Dorsolateral prefrontal cortex (tissue), 120 donors: ENCODE measurements at regions of chr9 and their contacts with region 1.

Region 1: DNA sequence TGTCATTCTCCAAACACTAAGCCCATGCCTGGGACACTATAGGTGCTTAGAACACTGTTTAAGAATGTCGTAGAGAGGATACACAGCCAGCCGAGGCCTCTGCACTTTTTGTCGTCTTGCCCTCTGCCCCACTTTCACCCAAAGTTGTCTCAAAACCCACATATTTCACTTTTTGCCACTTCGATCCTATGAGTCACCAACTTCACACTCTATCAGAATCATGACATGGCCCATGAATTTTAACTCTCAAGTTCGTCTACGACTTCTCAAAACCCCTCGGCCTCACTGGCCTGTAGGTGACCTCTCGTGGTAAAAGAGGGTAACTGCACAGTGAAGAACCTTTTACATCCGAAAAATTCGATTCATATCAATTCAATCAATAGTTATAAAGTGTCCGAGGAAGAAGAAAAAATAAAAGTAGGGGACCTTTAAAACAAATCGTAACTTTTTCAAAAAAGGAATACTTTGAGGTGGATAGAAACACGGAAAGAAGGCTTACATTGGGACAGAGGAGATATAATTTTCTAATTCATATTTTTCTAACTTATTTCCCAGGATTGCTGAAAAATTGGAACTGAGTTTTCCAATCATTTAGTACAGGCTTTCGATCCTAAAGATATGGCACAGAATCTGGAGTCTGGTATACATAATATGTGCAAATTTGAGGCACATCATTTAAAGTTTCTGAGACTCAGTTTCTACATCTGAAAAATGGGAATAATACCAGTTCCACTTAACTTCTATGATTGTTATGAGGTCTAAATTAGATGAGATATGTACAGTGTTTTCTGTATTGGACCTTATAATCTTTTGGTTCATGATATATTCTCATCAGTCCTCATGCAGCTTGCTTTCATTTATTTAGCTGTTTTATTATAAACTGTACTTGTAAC is 122.6 kb downstream of the APBA1 start:
- DNase-seq: peak in 1 of 10 donors; percentile 22
- H3K4me3 ChIP-seq: peak overlapping the region in 8 of 59 donors; percentile 2 to 44 (median 15)
- H3K27ac ChIP-seq: peak overlapping the region in 27 of 59 donors; percentile 0 to 76 (median 44)
- H3K27me3 ChIP-seq: no peaks in the 10 kb centered on the region
- CTCF ChIP-seq: peak; percentile 66 to 98 (median 86)

Region 2: DNA sequence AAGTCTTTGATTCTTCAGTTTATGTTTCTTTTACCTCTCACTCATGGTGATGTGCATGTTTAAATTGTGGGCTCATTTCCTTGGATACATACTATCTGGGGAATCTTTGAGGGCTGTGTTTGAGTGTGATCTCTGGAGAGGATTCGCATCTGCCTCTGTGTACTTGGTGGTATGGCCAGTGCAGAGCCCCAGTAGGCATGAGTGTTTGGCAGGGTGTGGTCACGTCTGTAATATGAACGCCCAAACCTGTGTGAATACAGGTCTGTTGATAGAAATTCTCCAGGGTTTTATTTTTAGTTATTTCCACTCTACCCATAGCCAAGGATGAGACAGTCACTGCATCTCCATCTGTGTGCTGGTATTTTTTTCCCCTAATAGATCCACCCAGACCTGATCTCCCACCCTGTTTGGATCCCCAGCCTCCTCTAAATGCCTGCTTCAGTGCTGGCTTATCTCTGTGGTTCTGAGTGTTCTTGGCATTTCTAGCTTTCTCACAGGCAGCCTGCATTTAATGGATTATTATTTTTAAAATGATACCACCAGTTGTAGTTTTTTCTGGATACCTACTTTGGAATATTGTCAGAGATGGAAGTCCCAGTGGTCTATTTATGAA is 338.0 kb before region 1 on chr9:
- intact Hi-C with region 1: loop called in 1 of 2 experiments (anchors 5 kb)
- DNase-seq: no peak
- H3K4me3 ChIP-seq: no peak overlapping the region
- H3K27ac ChIP-seq: peak overlapping the region in 3 of 59 donors; percentile 4 to 45 (median 22)
- H3K27me3 ChIP-seq: no peaks in the 10 kb centered on the region
- CTCF ChIP-seq: no peak

Region 3: DNA sequence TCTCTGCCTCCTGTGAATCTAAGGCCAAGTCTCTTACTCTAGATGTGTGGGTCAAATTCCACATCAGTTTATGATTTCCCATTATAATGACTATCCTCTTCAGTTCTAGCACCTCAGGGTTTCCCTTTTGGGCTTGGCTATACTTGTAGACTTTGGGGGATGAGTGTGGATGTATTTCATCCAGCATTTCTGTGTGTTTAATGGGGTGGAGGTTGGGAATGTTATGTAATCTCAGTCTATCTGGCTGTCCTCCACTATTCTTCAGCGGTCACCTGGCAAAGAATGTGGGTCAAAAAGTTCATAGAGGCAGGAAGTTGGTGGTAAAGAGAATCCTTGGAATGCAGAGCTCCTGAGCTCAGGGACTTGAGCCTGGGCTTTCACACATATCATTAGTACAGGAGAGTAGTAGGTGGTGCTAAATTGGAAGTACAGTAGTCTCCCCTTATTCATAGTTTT is 335.9 kb after region 1 on chr9:
- intact Hi-C with region 1: loop called in 1 of 2 experiments (anchors 5 kb)
- DNase-seq: no peak
- H3K4me3 ChIP-seq: peak overlapping the region in 6 of 59 donors; percentile 5 to 41 (median 19)
- H3K27ac ChIP-seq: peak overlapping the region in 6 of 59 donors; percentile 2 to 79 (median 48)
- H3K27me3 ChIP-seq: no peaks in the 10 kb centered on the region
- CTCF ChIP-seq: no peak